Heart right ventricle (tissue), 16 donors: ENCODE measurements at regions of chr2 and their contacts with region 1.

Region 1: DNA sequence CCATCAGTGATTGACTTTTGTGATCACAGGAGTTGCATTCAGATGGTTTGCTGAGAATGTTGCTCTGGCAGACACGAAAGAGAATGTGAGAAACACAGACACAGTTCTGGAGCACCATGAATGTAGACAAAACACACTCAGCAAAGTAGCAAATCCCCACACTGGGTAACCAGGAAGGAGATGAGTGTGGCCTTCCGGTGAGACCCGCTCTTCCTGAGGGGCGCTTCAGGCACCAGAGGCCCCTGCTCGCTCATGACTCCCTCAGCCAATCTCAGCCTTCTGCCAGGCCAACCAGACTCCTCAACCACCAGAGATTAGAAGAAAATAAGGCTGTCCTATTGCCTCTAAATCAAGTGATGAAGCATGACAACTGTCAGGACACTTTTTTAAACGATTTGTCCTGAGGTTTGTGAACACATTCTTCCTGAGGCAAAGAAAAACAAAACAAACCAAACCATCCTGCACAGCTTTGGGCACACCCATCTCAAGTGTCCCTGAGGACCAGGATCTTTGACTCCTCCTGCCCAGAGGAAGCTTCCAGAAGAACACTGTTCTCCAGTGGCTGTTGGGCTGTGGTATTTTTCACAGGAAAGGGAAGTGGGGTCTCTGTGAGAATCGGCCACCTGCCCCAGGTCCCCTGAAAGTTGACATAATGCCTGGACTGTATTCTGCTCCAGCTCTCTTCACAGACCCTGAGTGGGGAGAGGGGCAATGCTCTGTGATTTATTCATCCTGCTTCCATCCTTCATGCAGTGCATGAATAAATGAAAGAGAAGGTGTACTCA is 152.8 kb downstream of the BCL11A start:
- DNase-seq: no peak
- ATAC-seq: no peak
- H3K4me3 ChIP-seq: no peak overlapping the region
- H3K27ac ChIP-seq: no peak overlapping the region
- H3K4me1 ChIP-seq: no peaks in the 10 kb centered on the region
- H3K27me3 ChIP-seq: peaks cover 0 to 2% (median 0%) of the 10 kb centered on the region in 7 donors
- CTCF ChIP-seq: no peak

Region 2: DNA sequence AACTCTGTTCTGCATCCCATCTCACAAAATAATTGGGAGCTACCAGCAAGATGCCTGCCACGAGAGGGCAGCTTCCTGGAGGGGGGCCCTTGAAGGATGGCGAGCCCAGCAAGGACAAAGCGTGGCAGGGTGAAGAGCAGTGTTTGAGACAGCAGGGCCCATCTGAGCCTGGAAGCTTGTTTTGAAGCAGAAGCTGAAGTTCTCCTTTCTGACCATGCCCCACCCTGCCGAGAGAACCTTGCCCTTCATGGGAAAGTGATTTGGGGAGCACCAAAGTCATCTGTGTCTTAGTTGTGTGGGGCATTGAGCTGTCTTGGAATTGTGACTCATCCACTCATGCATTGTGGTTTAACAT is 63.5 kb before region 1 on chr2:
- intact Hi-C with region 1: loop called in 1 of 10 experiments (anchors 10 kb)
- DNase-seq: peak in 1 of 2 donors; percentile 47
- ATAC-seq: peak in 7 of 8 donors; percentile 47 to 75 (median 69)
- H3K4me3 ChIP-seq: no peak overlapping the region
- H3K27ac ChIP-seq: no peak overlapping the region
- H3K4me1 ChIP-seq: peaks cover 0 to 20% (median 0%) of the 10 kb centered on the region in 9 donors
- H3K27me3 ChIP-seq: no peaks in the 10 kb centered on the region
- CTCF ChIP-seq: peak in 7 of 9 donors; percentile 14 to 49 (median 36)

Region 3: GRCh38 chr2:60366135-60366712 is 34.4 kb before region 1 on chr2:
- intact Hi-C with region 1: no loop called
- DNase-seq: no peak
- ATAC-seq: peak in 2 of 8 donors; percentile 14 to 25
- H3K4me3 ChIP-seq: no peak overlapping the region
- H3K27ac ChIP-seq: no peak overlapping the region
- H3K4me1 ChIP-seq: peaks cover 0 to 15% (median 11%) of the 10 kb centered on the region in 9 donors
- H3K27me3 ChIP-seq: no peaks in the 10 kb centered on the region
- CTCF ChIP-seq: no peak

Region 4: GRCh38 chr2:60597346-60597745 is 196.7 kb after region 1 on chr2:
- intact Hi-C with region 1: no loop called
- DNase-seq: no peak
- ATAC-seq: no peak
- H3K4me3 ChIP-seq: no peak overlapping the region
- H3K27ac ChIP-seq: no peak overlapping the region
- H3K4me1 ChIP-seq: no peaks in the 10 kb centered on the region
- H3K27me3 ChIP-seq: peaks cover 0 to 11% (median 0%) of the 10 kb centered on the region in 7 donors
- CTCF ChIP-seq: no peak